Ovary (tissue), 10 donors: ENCODE measurements at regions of chr18 and their contacts with region 1.

Region 1: DNA sequence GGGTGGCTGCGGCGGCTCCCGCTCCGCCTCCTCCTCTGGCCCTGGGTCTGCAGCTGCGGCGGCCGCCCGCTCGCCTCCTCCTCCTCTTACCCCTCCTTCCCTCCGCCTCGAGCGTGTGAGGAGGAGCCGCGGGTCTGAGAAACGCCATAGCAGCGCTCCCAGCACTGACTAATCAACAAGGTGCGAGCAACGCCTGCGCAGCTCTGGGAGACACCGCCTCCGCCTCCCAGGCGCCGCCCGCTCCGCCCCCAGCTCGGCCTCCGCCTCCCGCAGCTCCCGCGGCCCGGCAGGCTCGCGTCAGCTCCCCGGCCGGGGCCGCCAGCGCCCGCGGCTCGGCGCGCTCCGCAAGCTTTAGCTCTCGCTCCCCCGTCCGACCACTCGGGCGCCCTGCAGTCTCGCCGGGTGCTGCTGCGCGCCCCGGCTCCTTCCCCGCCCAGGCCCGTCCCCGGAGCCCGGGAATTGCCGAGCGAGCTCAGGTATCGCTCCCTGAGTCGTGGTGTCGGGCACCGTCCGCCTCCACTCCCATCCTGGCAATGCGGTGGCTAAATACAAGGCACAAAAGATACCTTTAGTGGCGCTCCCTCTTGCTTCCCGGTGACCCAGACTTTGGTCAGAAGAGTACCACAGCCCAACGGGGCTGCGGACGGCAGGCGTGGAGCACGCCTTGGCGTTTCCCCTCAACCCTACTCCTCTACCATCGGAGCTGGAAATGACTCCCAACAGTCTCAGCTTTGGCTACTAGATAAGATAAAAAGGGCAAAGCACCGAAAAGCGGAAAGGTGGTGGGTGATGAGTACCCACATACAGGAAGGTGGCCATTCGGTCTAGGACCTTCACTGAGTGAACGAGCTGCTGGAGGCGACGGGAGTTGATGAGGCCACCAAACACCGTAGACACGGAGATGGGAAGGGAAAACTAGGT is at the start of gene GAREM1:
- DNase-seq: peak; percentile 94 to 97 (median 96)
- H3K4me3 ChIP-seq: peak within 1 kb of the TSS; percentile 91
- H3K27ac ChIP-seq: peak within 1 kb of the TSS; percentile 79 to 89
- H3K4me1 ChIP-seq: peaks cover 5% of the 10 kb centered on the region
- H3K27me3 ChIP-seq: no peaks in the 10 kb centered on the region
- CTCF ChIP-seq: peak; percentile 40 to 93 (median 90)
- EP300 ChIP-seq: no peak
- POLR2A ChIP-seq: peak; percentile 85
- total RNA-seq, gene GAREM1: 3.7 to 15.2 (median 7.1) TPM

Region 2: DNA sequence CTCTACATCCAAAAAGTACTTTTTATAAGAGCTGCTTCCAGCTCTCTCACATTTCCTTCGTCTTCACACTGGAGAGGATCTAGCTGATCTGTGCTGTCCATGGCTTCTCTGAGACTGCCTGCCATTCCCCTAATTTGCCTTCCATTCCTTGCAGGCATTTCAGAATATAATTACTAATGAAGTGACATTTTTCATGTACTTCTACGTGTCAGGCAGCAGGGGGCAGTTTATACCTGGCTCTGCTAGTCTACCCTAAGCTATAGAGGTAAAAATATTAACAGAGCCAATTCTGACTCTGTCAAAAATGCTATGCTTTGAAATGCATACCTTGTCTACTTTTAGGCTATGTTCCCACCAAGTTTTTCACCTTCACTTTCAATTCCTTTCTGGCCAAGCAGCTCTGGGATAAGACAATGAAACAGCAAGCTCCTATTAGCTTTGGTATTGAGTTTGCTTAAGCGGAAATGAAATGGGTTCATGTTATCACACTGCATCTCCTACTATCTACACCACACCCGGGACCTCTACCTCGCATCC is 199.2 kb before region 1 on chr18:
- intact Hi-C with region 1: loop called in 2 of 4 experiments (anchors 5 kb)
- DNase-seq: peak in 3 of 5 donors; percentile 27 to 50 (median 38)
- H3K4me3 ChIP-seq: no peak overlapping the region
- H3K27ac ChIP-seq: no peak overlapping the region
- H3K4me1 ChIP-seq: no peaks in the 10 kb centered on the region
- H3K27me3 ChIP-seq: no peaks in the 10 kb centered on the region
- CTCF ChIP-seq: peak; percentile 48 to 81 (median 73)
- EP300 ChIP-seq: no peak
- POLR2A ChIP-seq: no peak

Region 3: GRCh38 chr18:32289483-32290075 is 181.4 kb before region 1 on chr18:
- intact Hi-C with region 1: loop called in 2 of 4 experiments (anchors 10 kb)
- DNase-seq: peak in 1 of 5 donors; percentile 51
- H3K4me3 ChIP-seq: no peak overlapping the region
- H3K27ac ChIP-seq: no peak overlapping the region
- H3K4me1 ChIP-seq: no peaks in the 10 kb centered on the region
- H3K27me3 ChIP-seq: no peaks in the 10 kb centered on the region
- CTCF ChIP-seq: peak in 1 of 3 donors; percentile 33
- EP300 ChIP-seq: no peak
- POLR2A ChIP-seq: no peak

Region 4: DNA sequence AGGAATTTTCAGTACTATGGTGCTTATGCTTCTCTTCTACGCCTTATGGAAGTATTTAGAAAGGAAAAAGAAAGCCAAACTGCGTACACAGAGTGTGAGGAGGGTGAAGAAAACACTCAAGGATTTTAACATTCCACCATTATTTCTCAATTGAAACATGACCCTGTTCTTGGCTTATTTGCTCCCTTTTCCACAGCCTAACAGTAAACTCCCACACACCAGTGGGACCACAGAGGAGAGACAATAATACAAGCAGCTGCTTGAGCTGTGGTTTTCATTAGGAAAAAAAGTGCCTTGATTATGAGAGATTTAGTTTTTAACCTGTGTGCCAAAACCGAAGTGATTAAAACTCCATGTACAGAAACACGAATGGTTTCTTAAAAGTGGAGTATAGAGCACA is 146.8 kb before region 1 on chr18:
- intact Hi-C with region 1: loop called in 1 of 4 experiments (anchors 10 kb)
- DNase-seq: peak in 2 of 5 donors; percentile 31 to 53
- H3K4me3 ChIP-seq: no peak overlapping the region
- H3K27ac ChIP-seq: peak overlapping the region in 1 of 2 donors; percentile 33
- H3K4me1 ChIP-seq: peaks cover 12% of the 10 kb centered on the region
- H3K27me3 ChIP-seq: no peaks in the 10 kb centered on the region
- CTCF ChIP-seq: no peak
- EP300 ChIP-seq: no peak
- POLR2A ChIP-seq: no peak

Region 5: DNA sequence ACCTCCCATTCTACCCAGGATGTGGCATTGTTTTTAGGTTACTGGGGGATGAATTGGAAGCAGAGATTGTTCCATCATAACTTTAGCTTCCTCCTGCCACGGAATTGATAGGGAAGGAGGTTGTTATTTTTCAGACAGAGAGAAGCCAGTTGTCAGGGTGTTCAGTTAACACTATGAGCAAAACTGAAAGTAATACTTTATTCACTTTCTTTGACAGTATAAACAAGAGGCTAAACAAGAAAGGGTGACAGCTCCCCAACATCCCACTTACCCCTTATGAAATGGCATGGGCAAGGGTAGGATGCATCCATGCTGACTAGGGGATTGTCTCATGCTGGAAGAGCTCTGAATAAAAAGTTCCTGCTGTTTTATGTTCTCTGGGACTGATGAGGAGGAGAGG is 36.1 kb after region 1 on chr18:
- intact Hi-C with region 1: no loop called
- DNase-seq: no peak
- H3K4me3 ChIP-seq: no peak overlapping the region
- H3K27ac ChIP-seq: no peak overlapping the region
- H3K4me1 ChIP-seq: no peaks in the 10 kb centered on the region
- H3K27me3 ChIP-seq: no peaks in the 10 kb centered on the region
- CTCF ChIP-seq: no peak
- EP300 ChIP-seq: no peak
- POLR2A ChIP-seq: no peak

Region 6: DNA sequence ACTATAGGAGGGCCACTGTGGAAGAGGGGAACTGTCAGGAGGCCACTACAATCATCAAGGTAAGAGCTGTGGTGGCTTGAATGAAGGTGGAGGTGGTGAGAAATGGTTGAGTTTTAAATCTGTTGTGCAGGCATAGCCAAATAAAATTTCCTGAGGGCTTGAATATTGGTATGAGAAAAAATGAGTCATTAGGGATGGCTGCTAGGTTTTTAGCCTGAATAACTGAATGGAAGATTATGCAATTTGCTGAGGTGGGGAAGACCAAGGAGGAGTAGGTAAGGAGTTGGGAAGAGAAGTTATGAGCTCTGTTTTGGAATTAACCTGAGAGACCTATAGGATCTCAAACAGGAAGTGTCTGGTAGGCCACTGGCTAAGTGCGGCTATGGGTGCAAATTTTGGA is 217.8 kb after region 1 on chr18:
- intact Hi-C with region 1: no loop called
- DNase-seq: no peak
- H3K4me3 ChIP-seq: no peak overlapping the region
- H3K27ac ChIP-seq: no peak overlapping the region
- H3K4me1 ChIP-seq: no peaks in the 10 kb centered on the region
- H3K27me3 ChIP-seq: no peaks in the 10 kb centered on the region
- CTCF ChIP-seq: no peak
- EP300 ChIP-seq: no peak
- POLR2A ChIP-seq: no peak